Posterior cingulate gyrus (tissue), 11 donors: ENCODE measurements at regions of chr1 and their contacts with region 1.

Region 1: GRCh38 chr1:179081687-179082332 is at the start of gene TOR3A:
- DNase-seq: peak; percentile 89 to 99 (median 92)

Region 2: GRCh38 chr1:179025125-179025974 is 56.5 kb before region 1 on chr1 and contains the start of gene FAM20B:
- intact Hi-C with region 1: loop called (anchors 10 kb)
- DNase-seq: peak; percentile 88 to 99 (median 93)

Region 3: GRCh38 chr1:179129702-179130473 is 48.1 kb after region 1 on chr1:
- intact Hi-C with region 1: no loop called
- DNase-seq: no peak

Region 4: GRCh38 chr1:179229214-179230140 is 147.7 kb after region 1 on chr1 and contains the start of gene ABL2:
- intact Hi-C with region 1: loop called (anchors 10 kb)
- DNase-seq: peak; percentile 25 to 92 (median 54)

Region 5: DNA sequence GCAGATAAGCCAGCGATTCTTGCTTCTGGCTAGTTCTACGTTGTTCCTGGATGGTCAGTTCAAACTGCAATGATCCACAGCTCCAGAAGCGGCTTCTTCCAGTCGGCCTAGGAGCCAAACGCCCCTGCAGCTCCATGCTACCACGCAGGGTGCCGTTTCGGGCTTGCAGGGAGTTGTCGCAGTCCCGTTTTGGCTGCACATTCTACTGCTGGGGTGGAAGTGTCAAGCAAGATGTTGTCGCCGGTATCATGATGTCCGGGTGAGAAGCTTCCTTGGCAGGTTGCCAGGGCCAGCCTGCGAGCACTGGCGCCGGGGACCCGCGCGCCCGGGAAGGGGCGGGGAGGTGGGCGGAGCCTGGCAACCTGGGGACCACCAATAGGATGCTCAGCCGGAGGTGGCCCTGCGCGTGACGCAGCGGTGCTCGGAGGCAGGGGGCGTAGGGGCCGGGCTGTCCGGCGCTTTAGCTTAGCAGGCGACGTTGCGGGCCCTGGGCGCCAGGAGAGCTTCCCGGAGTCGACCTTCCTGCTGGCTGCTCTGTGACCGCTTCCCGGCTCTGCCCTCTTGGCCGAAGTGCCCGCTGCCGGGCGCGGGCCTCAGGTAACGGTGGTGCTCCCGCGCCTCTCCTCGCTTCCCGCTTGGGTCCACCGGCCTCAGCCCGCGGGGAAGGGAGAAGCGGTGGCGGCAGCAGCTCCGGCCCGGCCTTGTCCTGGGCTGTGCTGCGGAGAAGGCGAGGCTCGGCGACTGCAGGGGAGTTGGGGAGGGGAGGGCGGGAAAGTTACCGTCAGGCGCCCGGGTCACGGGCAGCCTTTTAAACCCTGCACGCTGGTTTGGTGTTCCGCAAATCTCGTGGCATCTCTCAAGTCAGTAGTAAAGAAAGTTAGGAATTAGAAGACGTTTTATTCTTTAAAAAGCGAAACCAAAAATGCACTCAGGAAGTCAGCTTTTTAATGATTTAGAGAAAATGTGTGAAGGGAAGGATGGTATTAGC is 211.8 kb after region 1 on chr1 and contains the start of gene SOAT1:
- intact Hi-C with region 1: loop called (anchors 2 kb)
- DNase-seq: peak; percentile 89 to 99 (median 95)

Region 6: GRCh38 chr1:179447489-179447888 is 365.7 kb after region 1 on chr1:
- intact Hi-C with region 1: no loop called
- DNase-seq: no peak